ENCODE measurements at regions of chr20 and their contacts with region 1.

Region 1: GRCh38 chr20:41693136-41693979 is 75.2 kb upstream of the CHD6 start:
- DNase-seq: peak; percentile 86
- H3K4me3 Mint-ChIP-seq: peak overlapping the region; percentile 85
- H3K27ac Mint-ChIP-seq: peak overlapping the region; percentile 91
- H3K4me1 Mint-ChIP-seq: peaks cover 16% of the 10 kb centered on the region
- H3K27me3 Mint-ChIP-seq: peaks cover 2% of the 10 kb centered on the region

Region 2: GRCh38 chr20:41365777-41366598 is 327.4 kb before region 1 on chr20:
- CTCF ChIA-PET with region 1: no interaction called
- intact Hi-C with region 1: no loop called
- DNase-seq: no peak
- H3K4me3 Mint-ChIP-seq: no peak overlapping the region
- H3K27ac Mint-ChIP-seq: no peak overlapping the region
- H3K4me1 Mint-ChIP-seq: peaks cover 6% of the 10 kb centered on the region
- H3K27me3 Mint-ChIP-seq: peaks cover 29% of the 10 kb centered on the region

Region 3: DNA sequence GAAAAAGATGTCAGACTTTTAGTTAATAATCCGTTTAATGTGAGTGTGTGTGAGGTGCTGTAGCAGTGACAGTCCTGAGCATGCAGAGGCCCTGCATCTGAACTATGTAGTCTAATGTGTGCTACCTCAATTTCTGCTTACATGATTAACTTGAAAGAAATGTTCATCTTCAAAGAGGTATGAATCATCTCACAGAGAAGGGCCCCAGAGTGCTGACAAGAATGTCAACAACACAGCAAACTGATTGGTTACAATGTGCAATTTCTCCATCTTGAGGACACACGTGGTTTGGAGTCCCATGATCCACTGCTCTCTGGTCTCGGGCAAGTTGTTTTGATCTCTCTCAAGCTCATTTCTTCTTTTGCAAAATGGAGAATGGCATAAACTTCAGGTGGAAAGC is 265.1 kb before region 1 on chr20:
- CTCF ChIA-PET with region 1: no interaction called
- intact Hi-C with region 1: loop called (anchors 1 kb)
- DNase-seq: peak; percentile 76
- H3K4me3 Mint-ChIP-seq: no peak overlapping the region
- H3K27ac Mint-ChIP-seq: peak overlapping the region; percentile 93
- H3K4me1 Mint-ChIP-seq: peaks cover 43% of the 10 kb centered on the region
- H3K27me3 Mint-ChIP-seq: no peaks in the 10 kb centered on the region

Region 4: GRCh38 chr20:41482647-41483552 is 210.5 kb before region 1 on chr20:
- CTCF ChIA-PET with region 1: no interaction called
- intact Hi-C with region 1: loop called (anchors 10 kb)
- DNase-seq: no peak
- H3K4me3 Mint-ChIP-seq: no peak overlapping the region
- H3K27ac Mint-ChIP-seq: no peak overlapping the region
- H3K4me1 Mint-ChIP-seq: peaks cover 21% of the 10 kb centered on the region
- H3K27me3 Mint-ChIP-seq: no peaks in the 10 kb centered on the region

Region 5: DNA sequence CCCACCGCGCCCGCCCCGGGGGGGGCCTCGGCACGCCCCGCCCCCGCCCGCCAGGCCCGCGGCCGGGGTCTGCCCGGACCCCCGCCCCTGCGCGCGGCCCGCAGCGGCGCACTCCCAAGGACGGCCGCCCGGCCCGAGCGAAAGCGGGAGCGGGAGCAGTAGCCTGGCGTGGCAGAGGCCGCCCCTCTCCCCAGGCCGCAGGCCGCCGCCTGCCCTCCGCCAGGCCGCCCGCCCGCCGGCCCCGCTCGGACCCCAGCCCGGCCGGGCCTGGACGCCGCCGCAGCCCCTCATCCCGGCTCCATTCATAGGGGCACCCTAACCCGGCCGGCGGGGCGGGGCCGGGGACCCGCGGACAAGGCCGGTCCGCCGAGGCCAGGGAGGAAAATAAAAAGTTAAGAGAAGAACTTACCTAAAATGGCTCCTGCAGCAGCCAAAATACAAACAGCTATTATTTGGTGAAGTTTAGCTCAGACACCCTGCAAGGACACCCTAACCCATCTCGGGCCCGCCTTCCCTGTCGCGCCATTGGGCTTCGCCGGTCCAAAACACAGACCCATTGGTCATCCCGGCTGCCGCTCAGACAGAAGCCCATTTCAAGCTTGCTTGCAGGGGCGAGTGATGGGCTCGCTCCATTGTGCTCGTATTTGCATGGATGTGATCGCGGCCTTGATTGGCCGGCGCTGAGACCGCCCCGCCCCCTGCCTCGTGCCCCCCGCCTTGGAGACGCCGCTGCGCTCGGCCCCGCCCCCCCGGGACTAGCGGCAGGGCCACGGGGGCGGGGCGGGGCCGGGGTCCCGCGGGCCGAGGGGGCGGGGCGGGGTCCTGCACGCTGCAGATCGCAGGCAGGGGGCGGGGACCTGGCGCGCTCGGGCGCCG is 75.2 kb before region 1 on chr20 and contains the start of gene CHD6:
- CTCF ChIA-PET with region 1: no interaction called
- intact Hi-C with region 1: loop called (anchors 1 kb)
- DNase-seq: peak; percentile 100
- H3K4me3 Mint-ChIP-seq: peak within 1 kb of the TSS; percentile 85
- H3K27ac Mint-ChIP-seq: peak within 1 kb of the TSS; percentile 68
- H3K4me1 Mint-ChIP-seq: peaks cover 39% of the 10 kb centered on the region
- H3K27me3 Mint-ChIP-seq: no peaks in the 10 kb centered on the region
- total RNA-seq, gene CHD6: 30.1 to 31.8 TPM

Region 6: GRCh38 chr20:41628514-41628913 is 64.8 kb before region 1 on chr20:
- CTCF ChIA-PET with region 1: no interaction called
- intact Hi-C with region 1: no loop called
- DNase-seq: no peak
- H3K4me3 Mint-ChIP-seq: no peak overlapping the region
- H3K27ac Mint-ChIP-seq: no peak overlapping the region
- H3K4me1 Mint-ChIP-seq: no peaks in the 10 kb centered on the region
- H3K27me3 Mint-ChIP-seq: peaks cover 4% of the 10 kb centered on the region

Measured in activated naive CD4-positive, alpha-beta T cell treated with anti-CD3 and anti-CD28 coated beads for 36 hours (primary cell).